SK-N-SH (cell line): ENCODE measurements at regions of chr9 and their contacts with region 1.

Region 1: GRCh38 chr9:128203024-128203706 is at the start of gene DNM1:
- DNase-seq: peak; percentile 99
- H3K4me3 ChIP-seq: peak within 1 kb of the TSS; percentile 64 to 76
- H3K27ac ChIP-seq: peak within 1 kb of the TSS; percentile 48 to 84; a peak in 3 of 4 replicates
- H3K4me1 ChIP-seq: peaks cover 0 to 20% of the 10 kb centered on the region in 2 experiments; a peak in 1 of 4 replicates
- H3K27me3 ChIP-seq: no peaks in the 10 kb centered on the region
- CTCF ChIP-seq: peak; percentile 63
- EP300 ChIP-seq: no peak
- RAD21 ChIP-seq: peak; percentile 20; the same call in 1 of the 2 replicates
- polyA plus RNA-seq, gene DNM1: 31.0 and 35.7 TPM in 2 replicates

Region 2: GRCh38 chr9:128117613-128118471 is 85.3 kb before region 1 on chr9:
- CTCF ChIA-PET with region 1: no interaction called
- POLR2A ChIA-PET with region 1: no interaction called
- DNase-seq: peak; percentile 91
- H3K4me3 ChIP-seq: peak overlapping the region in 1 of 2 experiments; percentile 42; a peak in 1 of 4 replicates
- H3K27ac ChIP-seq: no peak overlapping the region
- H3K4me1 ChIP-seq: peaks cover 4 to 7% of the 10 kb centered on the region in 2 experiments; a peak in 1 of 4 replicates
- H3K27me3 ChIP-seq: no peaks in the 10 kb centered on the region
- CTCF ChIP-seq: peak; percentile 100
- EP300 ChIP-seq: no peak
- RAD21 ChIP-seq: peak; percentile 92

Region 3: GRCh38 chr9:128127990-128128835 is 75.0 kb before region 1 on chr9:
- CTCF ChIA-PET with region 1: no interaction called
- POLR2A ChIA-PET with region 1: no interaction called
- DNase-seq: peak; percentile 94
- H3K4me3 ChIP-seq: peak overlapping the region; percentile 94 to 96
- H3K27ac ChIP-seq: peak overlapping the region; percentile 91 to 97
- H3K4me1 ChIP-seq: peaks cover 0 to 27% of the 10 kb centered on the region in 2 experiments; a peak in 1 of 4 replicates
- H3K27me3 ChIP-seq: no peaks in the 10 kb centered on the region
- CTCF ChIP-seq: no peak
- EP300 ChIP-seq: peak in 1 of 2 experiments; percentile 15; a peak in 1 of 4 replicates
- RAD21 ChIP-seq: no peak

Region 4: GRCh38 chr9:128191406-128192046 is 11.6 kb before region 1 on chr9 and contains the start of gene CIZ1:
- CTCF ChIA-PET with region 1: interaction called, 10 read pairs
- POLR2A ChIA-PET with region 1: interaction called, 5 read pairs
- DNase-seq: peak; percentile 97
- H3K4me3 ChIP-seq: peak within 1 kb of the TSS; percentile 63 to 94
- H3K27ac ChIP-seq: peak within 1 kb of the TSS; percentile 61 to 81
- H3K4me1 ChIP-seq: peaks cover 5 to 11% of the 10 kb centered on the region in 2 experiments; a peak in 2 of 4 replicates
- H3K27me3 ChIP-seq: no peaks in the 10 kb centered on the region
- CTCF ChIP-seq: peak; percentile 73
- EP300 ChIP-seq: no peak
- RAD21 ChIP-seq: no peak
- polyA plus RNA-seq, gene CIZ1: 36.6 and 37.0 TPM in 2 replicates

Region 5: GRCh38 chr9:128215491-128216404 is 12.6 kb after region 1 on chr9:
- CTCF ChIA-PET with region 1: interaction called, 10 read pairs
- POLR2A ChIA-PET with region 1: no interaction called
- DNase-seq: peak; percentile 60
- H3K4me3 ChIP-seq: no peak overlapping the region
- H3K27ac ChIP-seq: peak overlapping the region; percentile 64 to 73; a peak in 3 of 4 replicates
- H3K4me1 ChIP-seq: peaks cover 18 to 24% of the 10 kb centered on the region in 2 experiments; a peak in 3 of 4 replicates
- H3K27me3 ChIP-seq: no peaks in the 10 kb centered on the region
- CTCF ChIP-seq: no peak
- EP300 ChIP-seq: no peak; a peak in 1 of 4 replicates
- RAD21 ChIP-seq: no peak

Region 6: GRCh38 chr9:128244837-128245231 is 41.7 kb after region 1 on chr9:
- CTCF ChIA-PET with region 1: interaction called, 10 read pairs
- POLR2A ChIA-PET with region 1: interaction called, 4 read pairs
- DNase-seq: peak; percentile 96
- H3K4me3 ChIP-seq: peak overlapping the region in 1 of 2 experiments; percentile 39; a peak in 3 of 4 replicates
- H3K27ac ChIP-seq: peak overlapping the region; percentile 66 to 97; a peak in 3 of 4 replicates
- H3K4me1 ChIP-seq: peaks cover 21 to 39% of the 10 kb centered on the region in 2 experiments
- H3K27me3 ChIP-seq: no peaks in the 10 kb centered on the region
- CTCF ChIP-seq: no peak
- EP300 ChIP-seq: peak in 1 of 2 experiments; percentile 59; a peak in 2 of 4 replicates
- RAD21 ChIP-seq: no peak